Right cardiac atrium (tissue), 5 donors: ENCODE measurements at regions of chr1 and their contacts with region 1.

Region 1: DNA sequence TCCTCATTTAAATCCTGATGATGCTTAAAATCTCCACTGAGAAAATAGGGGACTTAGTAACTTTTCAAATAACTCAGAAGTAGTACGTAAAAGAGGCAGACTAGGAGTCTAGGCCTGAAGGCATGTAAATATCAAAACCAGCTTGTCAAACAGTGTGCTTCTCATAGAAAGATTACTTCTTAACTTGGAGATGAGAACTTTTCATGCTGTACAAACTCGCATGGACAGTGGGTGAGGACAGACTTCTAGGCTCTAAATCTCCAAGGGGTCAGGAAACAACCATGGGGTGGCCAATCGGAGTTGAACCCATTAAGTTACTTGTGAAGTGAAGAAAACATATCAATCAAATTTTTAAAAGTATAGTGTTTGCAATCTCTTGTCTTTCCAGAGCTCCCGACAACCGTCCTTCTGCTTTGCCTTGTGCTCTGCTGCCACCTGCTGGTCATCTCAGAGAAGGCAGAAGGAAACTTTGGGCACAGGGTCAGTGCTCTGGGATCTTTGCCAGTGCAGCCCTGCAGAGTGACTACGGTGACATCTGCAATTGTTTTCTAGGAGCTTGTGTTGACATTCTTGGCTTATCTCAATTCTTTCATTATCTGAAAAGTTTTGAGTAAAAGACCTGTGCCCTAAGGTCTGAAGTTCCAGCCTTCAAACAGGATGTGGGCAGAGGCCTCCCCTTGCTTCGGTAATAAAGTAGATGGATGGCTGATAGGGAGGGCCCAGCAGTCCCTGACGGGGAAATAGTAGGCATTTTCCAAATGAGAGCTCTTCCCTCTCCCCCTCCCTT is 105.1 kb upstream of the PDE4B start:
- DNase-seq: peak; percentile 84 to 94 (median 92)
- ATAC-seq: peak; percentile 89 to 90
- H3K4me3 ChIP-seq: no peak overlapping the region
- H3K27ac ChIP-seq: no peak overlapping the region
- H3K4me1 ChIP-seq: peaks cover 14% of the 10 kb centered on the region
- H3K27me3 ChIP-seq: no peaks in the 10 kb centered on the region

Region 2: GRCh38 chr1:65214340-65215027 is 473.1 kb before region 1 on chr1:
- intact Hi-C with region 1: loop called in 1 of 4 experiments (anchors 5 kb)
- DNase-seq: no peak
- ATAC-seq: no peak
- H3K4me3 ChIP-seq: no peak overlapping the region
- H3K27ac ChIP-seq: no peak overlapping the region
- H3K4me1 ChIP-seq: no peaks in the 10 kb centered on the region
- H3K27me3 ChIP-seq: no peaks in the 10 kb centered on the region

Region 3: DNA sequence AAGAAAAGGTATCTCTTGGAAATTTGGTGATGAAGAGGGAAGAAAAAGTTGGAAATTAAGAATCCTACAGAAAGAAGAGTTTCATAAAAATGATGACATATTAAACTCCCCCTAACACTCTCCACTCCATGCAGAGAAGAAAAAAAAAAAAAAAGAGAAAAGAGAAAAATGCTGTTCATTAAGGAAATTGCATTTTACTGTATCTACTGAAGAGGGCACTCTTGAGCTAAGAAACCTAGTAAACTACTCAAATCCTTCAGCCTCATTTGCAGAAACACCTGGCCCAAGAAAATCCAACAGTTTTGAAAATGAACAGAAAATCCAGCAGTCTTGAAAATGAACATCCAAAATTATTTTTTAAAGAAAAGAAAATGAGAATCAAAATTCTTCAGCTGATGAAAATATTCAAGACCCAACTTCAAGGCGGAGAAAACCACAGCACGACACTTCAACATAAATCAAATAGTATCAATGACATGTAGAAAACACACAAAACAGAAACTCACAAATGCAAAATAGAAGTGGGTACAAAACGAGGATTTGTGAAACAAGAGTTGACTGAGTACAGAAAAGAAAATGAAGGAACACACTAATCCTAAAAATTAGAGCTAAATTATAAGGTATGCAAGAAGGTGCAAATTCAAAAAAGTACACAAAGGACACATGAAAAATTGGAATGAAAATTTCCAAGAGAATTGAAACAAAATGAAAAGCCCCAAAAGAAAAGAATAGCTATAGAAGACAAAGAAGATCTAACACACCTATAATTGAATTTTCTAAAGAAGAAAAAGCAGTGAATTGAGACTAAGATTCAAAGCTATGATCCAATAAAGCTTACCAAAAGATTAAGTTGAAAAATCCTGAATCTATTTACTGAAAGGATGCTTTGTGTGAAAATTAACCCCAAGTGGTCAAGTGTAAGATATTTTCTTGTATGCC is 451.5 kb before region 1 on chr1:
- intact Hi-C with region 1: loop called in 2 of 4 experiments (anchors 5 kb)
- DNase-seq: no peak
- ATAC-seq: no peak
- H3K4me3 ChIP-seq: no peak overlapping the region
- H3K27ac ChIP-seq: no peak overlapping the region
- H3K4me1 ChIP-seq: no peaks in the 10 kb centered on the region
- H3K27me3 ChIP-seq: no peaks in the 10 kb centered on the region

Region 4: GRCh38 chr1:65419681-65420589 is 267.7 kb before region 1 on chr1:
- intact Hi-C with region 1: loop called in 1 of 4 experiments (anchors 10 kb)
- DNase-seq: peak; percentile 99 to 100 (median 99)
- ATAC-seq: peak; percentile 98 to 99
- H3K4me3 ChIP-seq: peak overlapping the region; percentile 81
- H3K27ac ChIP-seq: peak overlapping the region; percentile 96
- H3K4me1 ChIP-seq: peaks cover 10% of the 10 kb centered on the region
- H3K27me3 ChIP-seq: no peaks in the 10 kb centered on the region

Region 5: GRCh38 chr1:65431111-65431705 is 256.4 kb before region 1 on chr1:
- intact Hi-C with region 1: loop called in 3 of 4 experiments (anchors 5 to 10 kb)
- DNase-seq: no peak
- ATAC-seq: peak in 1 of 2 donors; percentile 49
- H3K4me3 ChIP-seq: no peak overlapping the region
- H3K27ac ChIP-seq: no peak overlapping the region
- H3K4me1 ChIP-seq: peaks cover 3% of the 10 kb centered on the region
- H3K27me3 ChIP-seq: no peaks in the 10 kb centered on the region

Region 6: DNA sequence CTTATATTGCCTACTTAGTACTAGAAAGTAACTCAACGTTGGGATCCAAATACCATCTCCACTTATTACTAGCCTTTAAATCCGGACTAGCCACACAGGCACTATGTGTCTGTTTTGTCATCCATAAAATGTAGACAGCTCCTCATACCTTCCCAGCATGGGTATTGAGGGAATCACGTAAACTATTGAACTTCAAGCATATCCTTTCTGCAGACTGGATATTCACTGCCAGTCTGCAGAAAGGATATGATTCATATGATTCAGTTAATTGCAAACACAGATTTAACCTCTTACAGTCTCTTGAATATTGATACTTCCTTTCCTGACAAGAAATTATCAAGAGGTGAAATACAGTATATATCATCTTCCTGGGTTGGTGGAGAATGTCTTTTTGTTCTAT is 81.2 kb before region 1 on chr1:
- intact Hi-C with region 1: no loop called
- DNase-seq: no peak
- ATAC-seq: no peak
- H3K4me3 ChIP-seq: no peak overlapping the region
- H3K27ac ChIP-seq: no peak overlapping the region
- H3K4me1 ChIP-seq: peaks cover 2% of the 10 kb centered on the region
- H3K27me3 ChIP-seq: no peaks in the 10 kb centered on the region

Region 7: DNA sequence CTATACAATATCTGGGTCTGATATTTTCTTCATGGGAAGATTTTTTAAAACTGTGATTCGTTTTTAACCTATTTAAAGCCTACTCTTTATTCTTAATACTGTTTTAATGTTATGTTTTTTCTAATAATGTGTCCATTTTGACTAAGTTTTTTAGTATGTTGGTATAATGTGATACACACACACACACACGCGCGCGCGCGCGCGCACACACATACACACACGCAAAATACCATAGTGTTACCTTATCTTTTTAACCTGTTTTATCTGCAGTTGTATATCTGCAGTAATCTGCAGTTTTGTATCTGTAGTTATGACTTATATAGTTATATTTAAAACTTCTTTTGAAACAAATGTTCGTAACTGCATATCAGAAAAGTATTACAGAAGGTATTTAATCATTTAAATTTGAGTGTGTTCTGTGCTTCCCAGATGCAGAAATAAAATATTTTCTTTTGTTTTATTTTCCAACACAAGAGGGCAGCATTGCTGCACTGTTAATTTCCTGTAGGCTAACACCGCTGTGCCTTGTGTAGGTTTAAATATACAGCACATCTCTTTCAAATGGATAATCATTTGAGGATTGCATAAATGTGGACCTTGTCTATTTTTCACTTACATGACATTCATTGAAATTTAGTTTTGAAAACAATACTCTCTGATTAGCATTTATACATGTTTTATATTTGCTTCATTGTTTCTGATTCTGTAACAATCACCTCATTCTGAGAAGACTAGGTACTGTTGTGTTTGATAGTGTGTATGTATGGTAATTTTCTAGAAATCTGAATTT is 271.1 kb after region 1 on chr1:
- intact Hi-C with region 1: no loop called
- DNase-seq: peak in 2 of 3 donors; percentile 13 to 73
- ATAC-seq: peak in 1 of 2 donors; percentile 59
- H3K4me3 ChIP-seq: no peak overlapping the region
- H3K27ac ChIP-seq: no peak overlapping the region
- H3K4me1 ChIP-seq: no peaks in the 10 kb centered on the region
- H3K27me3 ChIP-seq: no peaks in the 10 kb centered on the region